ENCODE measurements at regions of chr16 and their contacts with region 1.

Region 1: GRCh38 chr16:48001324-48001895 is 154.4 kb downstream of the ABCC12 start:
- DNase-seq: no peak

Region 2: GRCh38 chr16:47949714-47950113 is 51.7 kb before region 1 on chr16:
- intact Hi-C with region 1: no loop called
- DNase-seq: no peak

Region 3: DNA sequence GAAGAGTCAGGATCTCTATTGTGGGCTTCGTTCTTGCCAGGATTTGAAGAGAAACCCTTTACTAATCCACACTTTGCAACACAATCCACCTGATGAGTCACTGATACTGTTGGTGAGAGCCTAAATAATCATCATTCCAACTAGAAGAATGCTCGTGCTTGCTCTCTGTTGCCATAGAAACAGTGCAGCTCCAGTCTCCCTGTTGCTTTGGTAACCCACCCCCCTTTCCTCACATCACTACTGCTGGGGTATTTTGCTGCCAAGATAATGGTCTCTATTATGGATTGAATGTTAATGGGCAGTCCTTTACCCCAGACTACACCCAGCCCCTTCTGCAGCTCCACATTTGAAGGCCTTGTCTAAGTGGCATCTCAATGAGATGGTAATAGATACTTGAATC is 36.0 kb before region 1 on chr16:
- intact Hi-C with region 1: loop called in 1 of 2 experiments (anchors 1 kb)
- DNase-seq: no peak

Region 4: DNA sequence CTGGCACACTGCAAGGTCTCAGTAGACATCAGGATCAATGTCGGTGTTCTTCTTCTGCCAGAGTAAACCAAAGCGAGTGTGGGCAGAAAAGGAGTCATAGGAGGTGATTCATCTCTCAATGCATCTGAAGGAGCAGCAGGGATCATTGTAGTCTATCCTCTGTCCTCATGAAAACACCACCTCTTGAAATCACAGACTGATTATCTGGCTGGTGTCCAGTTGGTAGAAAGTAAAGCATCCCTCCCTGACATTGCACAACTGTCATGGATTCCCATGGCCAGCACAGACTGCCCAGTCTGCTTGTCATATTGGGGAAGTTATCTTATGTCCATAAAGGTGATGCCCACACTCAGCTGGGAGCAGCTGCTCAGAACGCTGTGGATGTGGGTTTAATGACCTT is 80.2 kb after region 1 on chr16:
- intact Hi-C with region 1: no loop called
- DNase-seq: no peak

Measured in posterior vena cava (tissue), 2 donors.